Activated CD8-positive, alpha-beta memory T cell treated with anti-CD3 and anti-CD28 coated beads, Interleukin-2, amount 10 ng/mL, durations not matched to agents 7 days and 5 days (primary cell): ENCODE measurements at regions of chr17 and their contacts with region 1.

Region 1: GRCh38 chr17:75632863-75633485 is at the start of gene SMIM5:
- DNase-seq: peak; percentile 87
- ATAC-seq: peak; percentile 90
- H3K4me3 Mint-ChIP-seq: no peak within 1 kb of the TSS
- H3K27ac Mint-ChIP-seq: peak within 1 kb of the TSS; percentile 9
- H3K4me1 Mint-ChIP-seq: no peaks in the 10 kb centered on the region
- H3K27me3 Mint-ChIP-seq: no peaks in the 10 kb centered on the region
- total RNA-seq, gene SMIM5: 0.15 TPM in 1 of 2 experiments, not detected in the other

Region 2: DNA sequence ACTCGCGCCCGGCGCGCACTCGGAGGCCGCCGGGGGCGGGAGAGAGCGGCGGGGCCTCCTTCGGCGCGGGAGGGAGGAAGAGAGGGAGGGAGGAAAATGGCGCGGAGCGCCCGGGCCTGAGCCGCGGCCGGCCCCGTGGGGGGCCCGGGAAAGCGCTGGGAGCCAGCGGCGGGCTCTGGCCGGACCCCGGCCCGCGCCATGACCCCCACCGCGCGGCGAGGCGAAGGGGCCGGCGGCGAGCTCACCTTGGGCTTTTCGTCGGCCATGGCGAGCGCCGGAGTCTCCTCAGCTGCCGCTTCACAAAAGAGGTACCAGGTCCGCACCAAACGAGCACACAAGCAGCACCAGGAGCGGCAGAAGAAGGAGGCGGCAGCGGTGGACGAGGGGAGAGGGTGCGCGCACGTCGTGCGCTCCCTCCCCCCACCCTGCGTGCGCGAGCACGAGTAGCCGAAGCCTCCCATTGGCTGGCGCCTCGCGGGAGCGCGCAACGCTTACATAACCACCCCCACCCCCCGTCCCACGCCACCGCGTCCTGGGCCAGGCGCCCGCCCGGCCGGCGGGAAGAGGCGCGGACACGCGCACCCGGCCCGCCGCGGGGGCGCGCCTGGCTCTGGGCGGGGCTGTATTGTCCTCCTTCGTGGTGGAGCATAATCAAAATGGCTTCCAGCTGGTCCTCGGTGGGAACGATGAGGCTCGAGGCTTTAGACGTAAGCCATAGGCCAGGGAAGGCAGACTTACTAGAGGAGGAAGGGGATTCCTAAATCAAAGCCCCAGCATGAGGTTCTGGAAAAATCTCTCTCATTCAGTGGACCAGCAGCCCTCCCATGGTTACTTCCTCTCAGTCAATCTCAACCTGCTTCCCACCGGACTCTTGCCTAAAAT is 450.2 kb before region 1 on chr17 and contains the start of gene SUMO2:
- CTCF ChIA-PET with region 1: no interaction called
- DNase-seq: peak; percentile 96
- ATAC-seq: peak; percentile 83
- H3K4me3 Mint-ChIP-seq: peak within 1 kb of the TSS; percentile 91
- H3K27ac Mint-ChIP-seq: peak within 1 kb of the TSS; percentile 99
- H3K4me1 Mint-ChIP-seq: peaks cover 48% of the 10 kb centered on the region
- H3K27me3 Mint-ChIP-seq: no peaks in the 10 kb centered on the region
- total RNA-seq, gene SUMO2: 469 to 639 TPM

Region 3: GRCh38 chr17:75405365-75406221 is 227.4 kb before region 1 on chr17 and contains the start of gene GRB2:
- CTCF ChIA-PET with region 1: no interaction called
- DNase-seq: peak; percentile 100
- ATAC-seq: peak; percentile 89
- H3K4me3 Mint-ChIP-seq: peak within 1 kb of the TSS; percentile 90
- H3K27ac Mint-ChIP-seq: peak within 1 kb of the TSS; percentile 91
- H3K4me1 Mint-ChIP-seq: peaks cover 45% of the 10 kb centered on the region
- H3K27me3 Mint-ChIP-seq: no peaks in the 10 kb centered on the region
- total RNA-seq, gene GRB2: 138 to 179 TPM

Region 4: DNA sequence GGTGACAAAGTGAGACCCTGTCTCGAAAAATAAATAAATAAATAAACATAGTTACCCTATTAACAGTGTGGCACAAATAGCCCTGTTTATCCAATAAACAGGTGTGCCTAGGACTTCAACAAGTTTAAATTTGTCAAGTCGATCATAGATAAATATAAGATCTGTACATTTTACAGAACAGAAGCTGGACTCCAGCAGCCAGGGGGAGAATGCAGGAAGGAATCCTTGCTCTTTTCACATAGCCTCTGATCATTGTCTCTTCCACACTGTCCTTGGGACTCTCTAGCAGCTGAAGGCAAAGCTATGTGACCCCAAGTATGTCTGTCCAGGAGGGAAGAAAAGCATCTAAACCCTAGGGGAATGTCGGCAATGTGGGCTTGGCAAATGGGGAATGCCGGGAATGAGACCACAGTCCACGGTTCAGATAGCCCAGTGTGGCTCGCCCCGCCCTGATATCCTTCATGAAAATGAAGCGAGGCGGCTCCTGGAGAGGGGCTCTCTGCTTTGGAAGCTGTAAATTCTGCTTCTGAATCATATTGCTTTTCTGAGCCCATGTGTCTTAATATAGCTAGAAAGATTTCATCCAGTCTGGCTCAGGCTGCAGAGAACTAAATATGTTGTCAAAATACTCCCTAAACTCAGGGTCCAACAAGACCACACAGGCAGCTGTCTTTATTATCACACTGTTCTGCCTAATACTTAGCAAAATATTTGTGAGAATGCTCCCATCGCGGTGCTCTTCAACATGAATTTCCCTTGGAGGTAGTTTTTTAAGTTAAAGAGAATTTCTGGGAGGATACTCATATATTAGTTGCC is 202.6 kb before region 1 on chr17:
- CTCF ChIA-PET with region 1: interaction called, 12 read pairs
- DNase-seq: no peak
- ATAC-seq: no peak
- H3K4me3 Mint-ChIP-seq: no peak overlapping the region
- H3K27ac Mint-ChIP-seq: no peak overlapping the region
- H3K4me1 Mint-ChIP-seq: peaks cover 22% of the 10 kb centered on the region
- H3K27me3 Mint-ChIP-seq: peaks cover 34% of the 10 kb centered on the region

Region 5: DNA sequence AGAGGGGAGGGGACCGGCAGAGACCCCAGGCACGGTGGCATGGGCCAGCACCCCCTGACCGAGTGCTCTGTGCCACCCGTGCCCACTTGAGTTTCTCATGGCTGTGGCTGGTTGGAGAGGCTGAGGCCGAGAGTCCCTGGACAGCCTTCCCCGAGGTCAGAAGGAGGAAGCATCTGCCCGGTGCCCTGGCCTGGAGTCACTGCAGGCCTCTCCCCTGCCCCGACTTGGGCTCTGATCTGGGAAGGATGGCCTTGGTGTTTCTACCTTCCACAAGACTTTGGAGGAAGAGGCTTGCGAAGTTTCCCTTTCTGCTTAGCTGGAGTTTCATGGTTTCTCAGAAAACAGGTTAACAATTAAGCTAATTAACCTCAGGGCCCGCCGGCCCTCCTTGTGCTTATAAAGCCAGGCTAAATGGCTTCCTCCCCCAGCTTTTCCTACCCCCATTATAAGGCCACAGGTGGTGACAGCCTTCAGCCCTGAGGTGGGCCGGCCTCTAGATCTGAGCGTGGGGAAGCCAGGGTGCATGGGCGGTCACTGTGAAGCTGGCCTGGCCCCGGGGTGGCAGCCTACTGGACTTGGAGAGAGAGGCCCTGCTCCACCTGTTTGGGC is 90.1 kb before region 1 on chr17:
- CTCF ChIA-PET with region 1: no interaction called
- DNase-seq: no peak
- ATAC-seq: no peak
- H3K4me3 Mint-ChIP-seq: no peak overlapping the region
- H3K27ac Mint-ChIP-seq: no peak overlapping the region
- H3K4me1 Mint-ChIP-seq: no peaks in the 10 kb centered on the region
- H3K27me3 Mint-ChIP-seq: no peaks in the 10 kb centered on the region

Region 6: GRCh38 chr17:75619506-75620431 is 13.2 kb before region 1 on chr17:
- CTCF ChIA-PET with region 1: interaction called, 30 read pairs
- DNase-seq: peak; percentile 50
- ATAC-seq: no peak
- H3K4me3 Mint-ChIP-seq: no peak overlapping the region
- H3K27ac Mint-ChIP-seq: no peak overlapping the region
- H3K4me1 Mint-ChIP-seq: peaks cover 2% of the 10 kb centered on the region
- H3K27me3 Mint-ChIP-seq: no peaks in the 10 kb centered on the region

Region 7: DNA sequence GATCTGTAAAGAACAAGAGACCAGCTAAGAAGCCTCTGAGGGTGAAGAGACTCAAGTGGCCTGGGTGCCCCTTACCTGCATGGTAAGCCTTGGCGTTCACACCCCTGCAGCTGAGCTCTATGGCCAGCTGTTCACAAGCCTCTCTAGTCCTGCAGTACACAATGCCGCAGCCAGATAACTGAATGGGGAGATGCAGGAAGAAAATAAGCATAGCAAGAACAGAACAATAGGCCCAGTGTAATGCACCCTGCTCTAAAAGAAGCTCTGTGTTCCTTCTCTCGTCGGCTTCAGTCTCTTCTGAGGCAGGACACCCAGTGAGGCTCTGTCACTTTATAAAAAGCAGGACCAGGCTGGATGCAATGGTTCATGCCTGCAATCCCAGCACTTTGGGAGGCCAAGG is 28.6 kb after region 1 on chr17:
- CTCF ChIA-PET with region 1: interaction called, 114 read pairs
- DNase-seq: no peak
- ATAC-seq: no peak
- H3K4me3 Mint-ChIP-seq: no peak overlapping the region
- H3K27ac Mint-ChIP-seq: no peak overlapping the region
- H3K4me1 Mint-ChIP-seq: peaks cover 12% of the 10 kb centered on the region
- H3K27me3 Mint-ChIP-seq: no peaks in the 10 kb centered on the region

Region 8: DNA sequence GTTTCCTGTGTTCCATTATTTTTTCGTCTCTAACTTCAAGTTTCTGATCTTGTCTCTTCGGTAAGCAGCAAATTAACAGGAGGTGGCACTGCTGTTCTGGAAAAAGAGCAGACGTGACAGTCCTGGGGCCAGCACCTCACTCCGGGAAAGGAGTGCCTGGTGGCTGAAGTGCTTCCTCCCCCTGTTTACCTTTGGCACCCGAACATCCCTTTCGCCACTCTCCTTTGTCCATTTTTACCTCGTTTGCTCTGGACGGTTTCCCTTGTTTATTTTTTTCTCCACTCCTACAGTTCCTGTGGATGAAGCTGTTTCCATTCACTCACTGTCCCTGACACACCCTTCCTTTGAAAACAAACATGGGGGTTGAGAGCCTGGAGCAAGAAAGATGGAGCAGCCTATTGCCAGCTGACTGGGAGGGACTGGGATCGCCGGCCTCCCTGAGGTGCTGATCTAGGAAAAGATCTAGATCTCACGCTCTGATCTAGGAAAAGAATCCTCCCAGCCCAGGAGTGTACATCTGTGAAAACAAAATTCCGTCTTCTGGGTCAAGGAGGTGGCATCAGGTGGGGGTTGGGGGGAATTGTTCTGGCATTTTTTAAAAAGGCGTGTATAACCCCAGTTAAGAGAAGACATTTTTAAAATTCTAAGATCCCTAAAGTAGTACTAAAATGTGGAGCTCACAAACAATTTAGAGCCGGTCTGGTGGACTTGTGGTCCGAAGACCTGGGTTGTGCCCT is 46.9 kb after region 1 on chr17:
- CTCF ChIA-PET with region 1: interaction called, 20 read pairs
- DNase-seq: no peak
- ATAC-seq: no peak
- H3K4me3 Mint-ChIP-seq: no peak overlapping the region
- H3K27ac Mint-ChIP-seq: no peak overlapping the region
- H3K4me1 Mint-ChIP-seq: peaks cover 15% of the 10 kb centered on the region
- H3K27me3 Mint-ChIP-seq: no peaks in the 10 kb centered on the region

Region 9: DNA sequence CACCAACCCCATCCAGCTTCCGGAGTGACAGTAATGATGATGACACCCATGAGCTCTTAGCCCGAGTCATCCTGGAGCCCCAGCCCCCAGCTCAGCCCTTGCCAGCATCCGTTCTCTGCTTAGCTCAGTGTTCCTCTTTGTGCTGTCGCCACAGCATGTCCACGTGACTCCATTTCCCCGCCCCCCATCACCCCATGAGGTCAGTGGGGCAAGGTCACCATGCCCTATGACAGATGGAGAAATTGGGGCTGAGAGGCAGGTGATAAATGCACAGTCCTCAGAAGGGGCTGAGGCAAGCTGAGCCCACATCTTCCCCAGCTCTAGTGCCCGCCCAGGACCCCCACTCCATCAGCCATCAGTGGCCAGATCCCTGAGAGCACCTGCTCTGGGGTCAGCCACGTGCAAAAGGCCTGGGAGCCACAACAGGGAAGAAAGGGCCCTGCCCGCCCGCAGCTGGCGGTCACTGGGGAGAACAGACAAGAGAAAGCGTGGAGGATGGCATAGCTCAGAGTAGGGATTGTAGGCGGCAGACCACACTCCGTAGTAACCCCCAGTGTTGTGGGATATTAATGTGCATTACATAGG is 105.3 kb after region 1 on chr17:
- CTCF ChIA-PET with region 1: interaction called, 14 read pairs
- DNase-seq: peak; percentile 82
- ATAC-seq: peak; percentile 79
- H3K4me3 Mint-ChIP-seq: no peak overlapping the region
- H3K27ac Mint-ChIP-seq: peak overlapping the region; percentile 72
- H3K4me1 Mint-ChIP-seq: peaks cover 14% of the 10 kb centered on the region
- H3K27me3 Mint-ChIP-seq: no peaks in the 10 kb centered on the region